Natural killer cell (primary cell): ENCODE measurements at regions of chr1 and their contacts with region 1.

Region 1: GRCh38 chr1:167454894-167455785 is 63.2 kb downstream of the CD247 start:
- DNase-seq: peak; percentile 75 to 92
- ATAC-seq: peak; percentile 30 to 69 (median 61)
- H3K4me3 ChIP-seq: peak overlapping the region; percentile 69
- H3K4me3 Mint-ChIP-seq: peak overlapping the region; percentile 91
- H3K27ac ChIP-seq: peak overlapping the region; percentile 98
- H3K27ac Mint-ChIP-seq: peak overlapping the region; percentile 91 to 100
- H3K4me1 ChIP-seq: peaks cover 77% of the 10 kb centered on the region
- H3K4me1 Mint-ChIP-seq: peaks cover 72 to 74% of the 10 kb centered on the region in 2 donors
- H3K27me3 ChIP-seq: no peaks in the 10 kb centered on the region
- H3K27me3 Mint-ChIP-seq: no peaks in the 10 kb centered on the region
- CTCF ChIP-seq: no peak

Region 2: DNA sequence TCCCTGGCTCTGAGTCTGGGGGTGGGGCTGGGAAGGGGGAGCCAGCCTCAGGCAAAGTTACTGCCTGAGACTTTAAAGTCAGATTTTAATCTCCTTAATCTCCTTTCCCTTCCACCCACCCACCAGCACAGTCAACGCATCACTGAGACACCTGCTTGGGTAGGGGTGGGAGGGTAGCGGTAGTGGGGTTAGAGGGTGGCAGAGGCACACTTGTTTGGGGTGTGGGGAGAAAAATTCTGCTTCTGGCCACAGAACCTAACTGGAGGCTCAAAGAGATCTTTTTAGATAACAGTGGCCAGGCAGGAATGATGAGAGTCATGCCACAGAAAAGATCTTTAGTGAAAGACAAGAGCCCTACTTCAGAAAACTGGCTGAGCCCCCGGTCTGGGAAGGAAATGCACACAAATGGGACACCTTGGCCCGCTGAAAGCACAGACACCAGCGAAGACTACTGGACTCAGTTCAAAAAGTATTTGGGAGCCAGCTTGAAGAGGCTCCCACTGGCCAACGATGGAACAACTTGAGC is 19.1 kb after region 1 on chr1:
- intact Hi-C with region 1: loop called (anchors 2 kb)
- DNase-seq: peak in 1 of 2 donors; percentile 74
- ATAC-seq: peak; percentile 38 to 52 (median 40)
- H3K4me3 ChIP-seq: peak overlapping the region; percentile 6
- H3K4me3 Mint-ChIP-seq: peak overlapping the region; percentile 86
- H3K27ac ChIP-seq: peak overlapping the region; percentile 87
- H3K27ac Mint-ChIP-seq: peak overlapping the region; percentile 91 to 100
- H3K4me1 ChIP-seq: peaks cover 70% of the 10 kb centered on the region
- H3K4me1 Mint-ChIP-seq: peaks cover 91% of the 10 kb centered on the region in 2 donors
- H3K27me3 ChIP-seq: no peaks in the 10 kb centered on the region
- H3K27me3 Mint-ChIP-seq: no peaks in the 10 kb centered on the region
- CTCF ChIP-seq: no peak

Region 3: DNA sequence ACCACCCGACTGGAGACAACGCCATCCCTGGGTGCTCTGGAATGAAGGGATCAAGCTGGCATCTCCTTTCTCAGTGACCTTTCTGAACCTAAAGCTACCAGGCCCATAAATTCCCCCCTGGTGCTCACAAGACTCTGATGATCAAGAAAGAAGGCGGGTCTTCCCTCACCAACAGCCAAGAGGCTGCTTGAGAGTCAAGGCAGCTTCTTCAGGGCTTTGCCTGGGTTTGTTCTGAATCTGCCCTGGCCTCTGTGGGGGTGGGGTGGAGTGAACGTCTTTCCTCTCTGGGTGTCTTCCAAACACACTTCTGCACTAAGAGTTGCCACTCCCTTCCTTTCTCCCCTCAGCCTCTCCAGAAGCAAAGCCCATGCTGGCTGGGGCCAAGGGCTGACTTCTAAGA is 27.0 kb after region 1 on chr1:
- intact Hi-C with region 1: loop called (anchors 2 kb)
- DNase-seq: peak in 1 of 2 donors; percentile 76
- ATAC-seq: peak; percentile 13 to 31 (median 22)
- H3K4me3 ChIP-seq: no peak overlapping the region
- H3K4me3 Mint-ChIP-seq: peak overlapping the region; percentile 92
- H3K27ac ChIP-seq: peak overlapping the region; percentile 97
- H3K27ac Mint-ChIP-seq: peak overlapping the region; percentile 91 to 100
- H3K4me1 ChIP-seq: peaks cover 93% of the 10 kb centered on the region
- H3K4me1 Mint-ChIP-seq: peaks cover 100% of the 10 kb centered on the region in 2 donors
- H3K27me3 ChIP-seq: no peaks in the 10 kb centered on the region
- H3K27me3 Mint-ChIP-seq: no peaks in the 10 kb centered on the region
- CTCF ChIP-seq: no peak